ENCODE measurements at regions of chr20 and their contacts with region 1.

Region 1: DNA sequence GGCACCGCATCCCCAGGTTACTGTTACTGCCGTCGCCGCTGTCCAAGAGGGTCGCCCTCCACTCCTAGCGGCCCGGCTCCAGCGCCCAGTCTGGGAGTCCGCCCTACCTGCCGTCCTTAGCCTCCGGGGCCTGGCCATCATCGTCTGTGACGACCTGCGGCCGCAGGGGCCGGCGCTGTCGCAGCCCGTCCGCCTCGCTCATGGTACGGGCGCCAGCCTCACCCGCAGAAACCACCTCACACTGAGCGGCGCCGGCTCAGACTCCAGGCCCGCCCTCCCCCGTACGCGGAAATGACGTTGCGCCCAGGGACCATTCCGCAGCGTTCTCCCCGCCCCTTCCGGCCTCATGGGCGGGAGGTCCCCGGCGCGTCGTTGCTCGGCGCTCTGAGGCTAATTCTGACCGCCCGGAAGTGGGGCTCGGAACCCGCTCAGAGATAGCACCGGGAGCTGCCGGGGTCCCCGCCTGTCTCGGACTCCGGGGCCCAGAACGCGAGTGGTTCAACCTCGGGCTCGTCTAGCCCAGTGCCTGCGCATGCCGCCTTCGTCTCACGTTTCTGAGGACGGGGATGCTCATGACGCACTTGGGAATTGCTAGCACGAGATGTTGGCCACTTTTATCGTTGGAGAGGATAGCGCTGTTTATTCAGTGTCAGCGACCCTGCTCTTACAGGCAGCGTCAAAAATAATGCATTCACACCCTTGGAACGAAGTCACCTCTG is at the start of gene APMAP:
- DNase-seq: peak; percentile 97
- ATAC-seq: peak; percentile 80 to 93 (median 84)
- H3K4me3 ChIP-seq: peak within 1 kb of the TSS; percentile 74 to 93 (median 87)
- H3K27ac ChIP-seq: peak within 1 kb of the TSS; percentile 69 to 90 (median 86)
- H3K4me1 ChIP-seq: peaks cover 0 to 37% (median 10%) of the 10 kb centered on the region in 4 donors
- H3K27me3 ChIP-seq: no peaks in the 10 kb centered on the region
- CTCF ChIP-seq: no peak
- POLR2A ChIP-seq: peak; percentile 100
- total RNA-seq, gene APMAP: 130 to 210 (median 140) TPM

Region 2: GRCh38 chr20:24584538-24585356 is 407.9 kb before region 1 on chr20:
- intact Hi-C with region 1: no loop called
- DNase-seq: no peak
- ATAC-seq: no peak
- H3K4me3 ChIP-seq: no peak overlapping the region
- H3K27ac ChIP-seq: no peak overlapping the region
- H3K4me1 ChIP-seq: no peaks in the 10 kb centered on the region
- H3K27me3 ChIP-seq: no peaks in the 10 kb centered on the region
- CTCF ChIP-seq: no peak
- POLR2A ChIP-seq: no peak

Region 3: GRCh38 chr20:24763386-24764026 is 229.1 kb before region 1 on chr20:
- intact Hi-C with region 1: no loop called
- DNase-seq: peak in 1 of 3 donors; percentile 13
- ATAC-seq: no peak
- H3K4me3 ChIP-seq: no peak overlapping the region
- H3K27ac ChIP-seq: no peak overlapping the region
- H3K4me1 ChIP-seq: no peaks in the 10 kb centered on the region
- H3K27me3 ChIP-seq: no peaks in the 10 kb centered on the region
- CTCF ChIP-seq: no peak
- POLR2A ChIP-seq: no peak

Region 4: DNA sequence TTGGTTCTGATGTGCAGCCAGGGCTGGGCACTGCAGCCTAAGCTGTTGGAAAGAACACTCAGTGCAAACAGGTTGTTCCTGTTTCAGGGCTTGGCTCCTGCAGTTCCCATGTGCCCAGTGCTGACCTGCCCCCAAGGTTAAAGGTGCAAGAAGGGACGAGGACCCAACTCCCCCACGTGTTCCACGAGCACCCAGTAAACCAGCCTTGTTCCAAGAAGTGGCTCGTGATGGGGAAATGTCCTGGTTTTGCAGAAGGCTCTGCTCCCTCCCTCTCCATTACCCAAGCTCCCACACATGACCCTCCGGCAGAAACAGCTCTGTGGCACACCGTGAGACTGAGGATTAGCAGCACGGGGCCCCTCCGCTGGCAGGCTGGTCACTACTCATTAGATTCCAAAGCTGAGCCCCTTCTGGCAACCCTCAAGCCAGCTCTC is 55.9 kb after region 1 on chr20:
- intact Hi-C with region 1: loop called in 1 of 2 experiments (anchors 5 kb)
- DNase-seq: peak; percentile 27 to 87 (median 72)
- ATAC-seq: peak in 3 of 4 donors; percentile 8 to 41 (median 13)
- H3K4me3 ChIP-seq: no peak overlapping the region
- H3K27ac ChIP-seq: no peak overlapping the region
- H3K4me1 ChIP-seq: peaks cover 3 to 83% (median 21%) of the 10 kb centered on the region in 4 donors
- H3K27me3 ChIP-seq: no peaks in the 10 kb centered on the region
- CTCF ChIP-seq: no peak
- POLR2A ChIP-seq: no peak

Region 5: DNA sequence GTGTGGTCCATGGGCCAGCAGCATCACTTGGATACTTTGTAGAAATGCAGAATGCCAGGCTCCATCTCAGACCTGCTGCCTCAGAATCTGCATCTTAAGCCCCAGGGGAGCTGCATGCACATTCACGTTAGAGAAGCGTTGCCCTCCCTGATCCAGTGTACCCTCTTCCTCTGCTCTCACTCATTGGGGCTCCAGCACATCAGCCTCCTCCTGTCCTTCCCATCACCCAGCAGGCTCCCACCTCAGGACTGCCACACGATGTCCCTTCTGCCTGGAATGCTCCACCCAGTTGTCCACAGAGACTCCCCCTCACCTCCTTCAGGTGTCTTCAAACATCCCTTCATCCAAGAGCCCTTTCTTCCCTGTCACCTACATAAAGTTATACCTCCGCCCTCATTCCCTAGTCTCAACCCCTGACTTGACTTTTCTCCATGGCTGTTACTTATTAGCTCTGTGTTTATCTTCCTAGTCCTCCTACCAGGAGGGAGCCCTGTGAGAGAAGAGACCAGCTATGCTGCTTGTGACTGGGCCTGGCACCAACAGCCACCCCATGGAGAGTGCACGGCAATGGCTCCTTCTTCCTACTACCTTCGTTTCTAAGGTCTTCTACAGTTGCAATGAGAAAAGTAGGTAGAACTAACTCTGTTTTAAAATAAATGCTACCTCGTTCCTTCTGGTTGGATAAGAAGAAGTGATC is 68.6 kb after region 1 on chr20:
- intact Hi-C with region 1: loop called (anchors 5 kb)
- DNase-seq: peak in 2 of 3 donors; percentile 30 to 62
- ATAC-seq: peak; percentile 44 to 58 (median 55)
- H3K4me3 ChIP-seq: no peak overlapping the region
- H3K27ac ChIP-seq: no peak overlapping the region
- H3K4me1 ChIP-seq: peaks cover 0 to 31% (median under 1%) of the 10 kb centered on the region in 4 donors
- H3K27me3 ChIP-seq: no peaks in the 10 kb centered on the region
- CTCF ChIP-seq: no peak
- POLR2A ChIP-seq: no peak

Region 6: GRCh38 chr20:25178563-25179438 is 186.2 kb after region 1 on chr20:
- intact Hi-C with region 1: loop called in 1 of 2 experiments (anchors 10 kb)
- DNase-seq: no peak
- ATAC-seq: peak; percentile 81 to 89 (median 84)
- H3K4me3 ChIP-seq: no peak overlapping the region
- H3K27ac ChIP-seq: no peak overlapping the region
- H3K4me1 ChIP-seq: no peaks in the 10 kb centered on the region
- H3K27me3 ChIP-seq: no peaks in the 10 kb centered on the region
- CTCF ChIP-seq: peak; percentile 67 to 81 (median 70)
- POLR2A ChIP-seq: no peak

Region 7: GRCh38 chr20:25223179-25223661 is 230.6 kb after region 1 on chr20:
- intact Hi-C with region 1: no loop called
- DNase-seq: no peak
- ATAC-seq: peak in 1 of 4 donors; percentile 53
- H3K4me3 ChIP-seq: no peak overlapping the region
- H3K27ac ChIP-seq: no peak overlapping the region
- H3K4me1 ChIP-seq: peaks cover 0 to 20% (median 9%) of the 10 kb centered on the region in 4 donors
- H3K27me3 ChIP-seq: no peaks in the 10 kb centered on the region
- CTCF ChIP-seq: no peak
- POLR2A ChIP-seq: no peak

Measured in right lobe of liver (tissue), 6 donors.